Esophagus muscularis mucosa (tissue), 4 donors: ENCODE measurements at regions of chr16 and their contacts with region 1.

Region 1: GRCh38 chr16:87316923-87317749 is at the start of gene C16orf95:
- DNase-seq: peak; percentile 99
- H3K4me3 ChIP-seq: peak within 1 kb of the TSS; percentile 87 to 100 (median 94)
- H3K27ac ChIP-seq: peak within 1 kb of the TSS; percentile 88 to 97 (median 95)
- H3K4me1 ChIP-seq: peaks cover 8 to 16% (median 10%) of the 10 kb centered on the region in 4 donors
- H3K27me3 ChIP-seq: no peaks in the 10 kb centered on the region
- CTCF ChIP-seq: peak; percentile 63 to 71 (median 65)
- EP300 ChIP-seq: no peak
- POLR2A ChIP-seq: peak; percentile 88
- total RNA-seq, gene C16orf95: 0.50 to 3.2 (median 1.8) TPM

Region 2: GRCh38 chr16:87278191-87279095 is 38.7 kb before region 1 on chr16:
- intact Hi-C with region 1: no loop called
- DNase-seq: no peak
- H3K4me3 ChIP-seq: no peak overlapping the region
- H3K27ac ChIP-seq: no peak overlapping the region
- H3K4me1 ChIP-seq: peaks cover 0 to 9% (median 7%) of the 10 kb centered on the region in 4 donors
- H3K27me3 ChIP-seq: peaks cover 0 to 36% (median 0%) of the 10 kb centered on the region in 4 donors
- CTCF ChIP-seq: peak; percentile 78 to 86 (median 79)
- EP300 ChIP-seq: no peak
- POLR2A ChIP-seq: no peak

Region 3: GRCh38 chr16:87363771-87364455 is 46.8 kb after region 1 on chr16:
- intact Hi-C with region 1: loop called (anchors 5 kb)
- DNase-seq: no peak
- H3K4me3 ChIP-seq: peak overlapping the region; percentile 22 to 34 (median 30)
- H3K27ac ChIP-seq: peak overlapping the region; percentile 73 to 79 (median 77)
- H3K4me1 ChIP-seq: peaks cover 42 to 56% (median 53%) of the 10 kb centered on the region in 4 donors
- H3K27me3 ChIP-seq: no peaks in the 10 kb centered on the region
- CTCF ChIP-seq: no peak
- EP300 ChIP-seq: no peak
- POLR2A ChIP-seq: no peak

Region 4: DNA sequence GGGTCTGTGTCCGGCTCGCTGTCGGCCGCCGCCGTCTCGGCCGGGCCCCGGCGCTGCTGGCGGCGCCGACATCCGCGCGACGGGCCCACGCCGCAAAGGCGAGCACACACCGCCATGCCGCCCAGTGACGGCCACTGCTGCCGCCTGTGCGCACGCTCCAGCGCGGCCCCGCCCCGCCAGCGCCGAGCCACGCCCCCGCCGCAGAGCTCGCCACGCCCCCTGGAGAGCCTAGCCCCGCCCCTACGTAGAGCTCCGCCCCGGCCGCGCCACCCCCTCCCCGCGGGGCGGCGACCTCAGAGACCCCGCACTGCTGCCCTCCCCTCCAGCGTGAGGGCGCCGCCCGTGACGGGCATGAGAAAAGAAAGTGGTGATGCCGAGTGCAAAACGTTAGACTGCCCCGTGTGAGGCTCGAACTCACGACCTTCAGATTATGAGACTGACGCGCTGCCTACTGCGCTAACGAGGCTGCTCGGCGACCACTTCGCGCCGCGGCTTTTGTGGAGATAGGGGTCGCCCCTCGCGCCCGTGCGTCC is 66.6 kb after region 1 on chr16 and contains the start of gene FBXO31:
- intact Hi-C with region 1: loop called (anchors 5 kb)
- DNase-seq: peak; percentile 95
- H3K4me3 ChIP-seq: peak within 1 kb of the TSS; percentile 86 to 91 (median 89)
- H3K27ac ChIP-seq: peak within 1 kb of the TSS; percentile 93 to 99 (median 96)
- H3K4me1 ChIP-seq: peaks cover 58 to 86% (median 76%) of the 10 kb centered on the region in 4 donors
- H3K27me3 ChIP-seq: no peaks in the 10 kb centered on the region
- CTCF ChIP-seq: no peak
- EP300 ChIP-seq: no peak
- POLR2A ChIP-seq: no peak
- total RNA-seq, gene FBXO31: 68.8 to 173 (median 102) TPM

Region 5: GRCh38 chr16:87465306-87465705 is 148.2 kb after region 1 on chr16:
- intact Hi-C with region 1: no loop called
- DNase-seq: peak; percentile 96
- H3K4me3 ChIP-seq: peak overlapping the region; percentile 21 to 35 (median 28)
- H3K27ac ChIP-seq: peak overlapping the region; percentile 83 to 93 (median 92)
- H3K4me1 ChIP-seq: peaks cover 70 to 91% (median 86%) of the 10 kb centered on the region in 4 donors
- H3K27me3 ChIP-seq: no peaks in the 10 kb centered on the region
- CTCF ChIP-seq: no peak
- EP300 ChIP-seq: peak; percentile 59
- POLR2A ChIP-seq: no peak